ENCODE measurements at regions of chr11 and their contacts with region 1.

Region 1: DNA sequence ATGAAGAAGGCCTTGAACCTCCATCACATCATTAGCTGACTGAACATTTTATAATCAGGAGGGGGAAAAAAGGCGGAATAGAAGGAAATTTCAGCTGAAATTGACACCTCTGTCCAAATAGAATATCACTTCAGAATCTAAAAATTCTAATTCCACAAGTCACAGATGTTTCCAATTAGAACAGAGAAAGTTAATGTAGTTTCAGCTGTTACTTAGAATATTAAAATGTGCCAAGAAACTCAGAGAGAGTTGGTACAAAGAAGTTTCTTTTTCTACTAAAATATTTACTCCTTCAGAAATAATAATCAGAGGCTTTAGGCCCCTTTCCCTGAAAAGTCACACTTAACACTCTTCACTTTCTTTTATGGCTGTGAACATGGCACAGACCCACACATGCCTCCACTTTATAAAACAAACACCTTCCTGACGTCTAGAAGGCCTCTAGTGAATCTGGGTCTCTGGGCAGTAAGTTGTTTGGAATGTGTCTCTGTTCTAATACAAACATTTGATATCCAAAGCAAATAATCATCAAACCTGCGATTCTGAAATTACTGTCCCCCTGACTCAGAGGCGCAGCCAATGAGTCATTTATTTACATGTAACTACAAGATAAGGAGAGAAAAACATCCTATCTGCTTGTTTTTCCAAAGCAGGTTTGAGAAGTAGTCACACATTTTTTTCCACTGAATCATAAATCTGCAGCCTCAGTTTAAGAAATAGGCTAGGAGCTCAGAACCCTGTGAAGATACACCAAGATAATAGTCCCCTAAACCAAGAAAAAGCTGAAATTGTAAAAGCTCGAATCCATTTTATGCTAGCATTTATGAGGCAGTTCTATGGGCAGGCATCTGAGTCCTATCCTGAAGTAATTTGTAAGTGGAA is 148.4 kb downstream of the ME3 start:
- DNase-seq: peak; percentile 81
- H3K4me3 Mint-ChIP-seq: peak overlapping the region; percentile 11
- H3K27ac Mint-ChIP-seq: peak overlapping the region; percentile 74
- H3K4me1 Mint-ChIP-seq: peaks cover 28% of the 10 kb centered on the region
- H3K27me3 Mint-ChIP-seq: no peaks in the 10 kb centered on the region
- CTCF ChIP-seq: no peak

Region 2: GRCh38 chr11:86483940-86484794 is 39.8 kb before region 1 on chr11:
- CTCF ChIA-PET with region 1: no interaction called
- POLR2A ChIA-PET with region 1: interaction called, 3 read pairs
- intact Hi-C with region 1: loop called (anchors 5 kb)
- DNase-seq: peak; percentile 88
- H3K4me3 Mint-ChIP-seq: no peak overlapping the region
- H3K27ac Mint-ChIP-seq: peak overlapping the region; percentile 39
- H3K4me1 Mint-ChIP-seq: peaks cover 36% of the 10 kb centered on the region
- H3K27me3 Mint-ChIP-seq: no peaks in the 10 kb centered on the region
- CTCF ChIP-seq: no peak

Region 3: DNA sequence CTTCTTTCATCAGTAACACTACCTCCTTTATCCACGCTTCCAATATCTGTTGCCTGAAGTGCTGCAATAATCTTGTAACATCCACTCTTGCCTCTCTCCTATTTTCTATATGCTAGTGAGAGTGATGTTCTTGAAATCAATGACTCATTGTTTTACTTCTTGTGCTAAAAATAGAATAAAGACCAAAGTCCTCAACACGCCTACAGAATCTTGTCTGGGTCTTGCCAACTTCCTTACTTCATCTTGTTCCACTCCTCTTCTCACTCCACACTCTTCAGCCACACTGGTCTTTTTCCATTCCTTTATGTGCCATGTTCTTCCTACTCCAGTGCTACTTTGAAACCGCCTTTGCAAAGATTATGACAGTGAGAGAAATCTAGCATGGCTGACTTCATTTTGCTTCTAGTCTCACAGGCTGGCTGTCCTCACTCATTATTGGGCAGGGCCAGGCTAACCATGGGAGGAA is 12.9 kb before region 1 on chr11:
- CTCF ChIA-PET with region 1: no interaction called
- POLR2A ChIA-PET with region 1: interaction called, 13 read pairs
- intact Hi-C with region 1: no loop called
- DNase-seq: peak; percentile 74
- H3K4me3 Mint-ChIP-seq: no peak overlapping the region
- H3K27ac Mint-ChIP-seq: no peak overlapping the region
- H3K4me1 Mint-ChIP-seq: peaks cover 8% of the 10 kb centered on the region
- H3K27me3 Mint-ChIP-seq: no peaks in the 10 kb centered on the region
- CTCF ChIP-seq: no peak